Activated CD8-positive, alpha-beta T cell treated with anti-CD3 and anti-CD28 coated beads, Interleukin-2, amount 10 ng/mL, durations not matched to agents 7 days and 5 days (primary cell): ENCODE measurements at regions of chr2 and their contacts with region 1.

Region 1: DNA sequence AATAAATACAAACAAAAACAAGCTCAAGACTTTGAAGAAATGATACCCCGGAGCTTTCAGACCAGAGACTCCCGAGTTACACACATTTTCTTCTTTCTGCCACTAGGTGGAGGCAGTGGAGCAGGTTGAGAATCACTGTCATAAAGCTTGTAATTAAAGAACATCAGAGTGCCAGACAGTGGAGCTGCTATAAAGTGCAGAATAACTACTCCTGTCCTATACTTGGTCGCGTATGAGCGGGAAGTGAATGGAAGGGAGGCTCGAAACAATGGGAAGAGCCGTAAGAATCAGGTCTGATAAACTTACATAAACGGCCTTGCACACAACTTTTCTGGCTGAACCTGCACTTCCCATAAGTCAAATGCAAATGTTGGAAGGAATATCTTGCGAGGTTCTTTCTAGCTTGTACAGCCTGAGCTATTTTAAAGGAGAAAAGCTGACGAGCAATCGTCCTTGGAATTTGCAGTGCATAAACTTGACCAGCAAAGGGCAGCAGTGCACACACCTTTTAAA is 189.0 kb downstream of the RPIA start:
- DNase-seq: peak; percentile 52
- ATAC-seq: peak; percentile 60
- H3K4me3 Mint-ChIP-seq: no peak overlapping the region
- H3K27ac Mint-ChIP-seq: no peak overlapping the region
- H3K4me1 Mint-ChIP-seq: no peaks in the 10 kb centered on the region
- H3K27me3 Mint-ChIP-seq: peaks cover 24% of the 10 kb centered on the region

Region 2: GRCh38 chr2:88739985-88740600 is 140.4 kb before region 1 on chr2:
- CTCF ChIA-PET with region 1: interaction called, 15 read pairs
- POLR2A ChIA-PET with region 1: no interaction called
- DNase-seq: peak; percentile 80
- ATAC-seq: peak; percentile 70
- H3K4me3 Mint-ChIP-seq: no peak overlapping the region
- H3K27ac Mint-ChIP-seq: no peak overlapping the region
- H3K4me1 Mint-ChIP-seq: peaks cover 16% of the 10 kb centered on the region
- H3K27me3 Mint-ChIP-seq: no peaks in the 10 kb centered on the region

Region 3: DNA sequence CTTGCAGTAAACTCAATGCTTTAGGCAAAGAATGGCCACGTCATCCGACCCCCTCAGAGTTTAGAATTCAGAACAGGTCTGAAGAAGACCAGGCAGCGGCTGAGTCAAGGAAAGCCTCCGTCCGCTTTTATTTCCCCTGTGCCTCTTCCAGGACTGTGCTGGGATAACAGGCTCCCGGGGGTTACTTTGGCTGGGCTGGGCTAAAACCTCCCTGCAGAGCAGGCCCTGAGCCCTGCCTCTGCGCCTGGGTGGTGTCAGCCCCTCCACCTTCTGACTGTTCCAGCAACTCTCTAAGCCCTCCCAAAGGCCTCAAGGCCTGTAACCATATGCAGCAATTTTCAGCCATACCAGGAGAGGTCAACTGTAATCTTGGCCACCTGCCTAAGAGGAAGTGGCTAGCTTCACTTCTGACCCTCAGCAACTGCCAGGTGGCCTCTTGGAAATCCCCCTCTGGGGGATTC is 22.5 kb before region 1 on chr2:
- CTCF ChIA-PET with region 1: interaction called, 28 read pairs
- POLR2A ChIA-PET with region 1: no interaction called
- DNase-seq: no peak
- ATAC-seq: no peak
- H3K4me3 Mint-ChIP-seq: no peak overlapping the region
- H3K27ac Mint-ChIP-seq: no peak overlapping the region
- H3K4me1 Mint-ChIP-seq: no peaks in the 10 kb centered on the region
- H3K27me3 Mint-ChIP-seq: peaks cover 13% of the 10 kb centered on the region

Region 4: GRCh38 chr2:88865801-88866371 is 14.6 kb before region 1 on chr2:
- CTCF ChIA-PET with region 1: interaction called, 28 read pairs
- POLR2A ChIA-PET with region 1: no interaction called
- DNase-seq: no peak
- ATAC-seq: no peak
- H3K4me3 Mint-ChIP-seq: no peak overlapping the region
- H3K27ac Mint-ChIP-seq: no peak overlapping the region
- H3K4me1 Mint-ChIP-seq: peaks cover 13% of the 10 kb centered on the region
- H3K27me3 Mint-ChIP-seq: peaks cover 42% of the 10 kb centered on the region

Region 5: DNA sequence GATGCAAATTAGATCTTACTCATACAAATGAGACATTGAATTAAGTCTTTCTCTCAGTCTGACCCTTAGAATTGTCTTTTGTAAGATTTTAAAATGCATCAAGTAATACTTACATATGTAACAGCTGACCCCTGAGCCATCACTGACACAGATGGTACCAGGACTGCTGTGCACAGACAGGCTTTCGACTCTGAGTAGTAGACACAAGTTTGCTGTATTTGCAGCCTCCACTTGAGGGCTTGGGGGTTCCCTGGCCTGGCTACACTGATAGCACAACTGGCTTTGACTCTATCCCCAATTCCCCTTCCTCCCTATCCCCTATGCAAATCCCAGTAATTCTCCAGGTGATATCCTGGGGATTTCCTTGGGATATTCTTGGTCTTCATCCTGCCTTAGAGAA is 11.7 kb after region 1 on chr2:
- CTCF ChIA-PET with region 1: interaction called, 37 read pairs
- POLR2A ChIA-PET with region 1: no interaction called
- DNase-seq: no peak
- ATAC-seq: no peak
- H3K4me3 Mint-ChIP-seq: no peak overlapping the region
- H3K27ac Mint-ChIP-seq: no peak overlapping the region
- H3K4me1 Mint-ChIP-seq: no peaks in the 10 kb centered on the region
- H3K27me3 Mint-ChIP-seq: peaks cover 18% of the 10 kb centered on the region

Region 6: DNA sequence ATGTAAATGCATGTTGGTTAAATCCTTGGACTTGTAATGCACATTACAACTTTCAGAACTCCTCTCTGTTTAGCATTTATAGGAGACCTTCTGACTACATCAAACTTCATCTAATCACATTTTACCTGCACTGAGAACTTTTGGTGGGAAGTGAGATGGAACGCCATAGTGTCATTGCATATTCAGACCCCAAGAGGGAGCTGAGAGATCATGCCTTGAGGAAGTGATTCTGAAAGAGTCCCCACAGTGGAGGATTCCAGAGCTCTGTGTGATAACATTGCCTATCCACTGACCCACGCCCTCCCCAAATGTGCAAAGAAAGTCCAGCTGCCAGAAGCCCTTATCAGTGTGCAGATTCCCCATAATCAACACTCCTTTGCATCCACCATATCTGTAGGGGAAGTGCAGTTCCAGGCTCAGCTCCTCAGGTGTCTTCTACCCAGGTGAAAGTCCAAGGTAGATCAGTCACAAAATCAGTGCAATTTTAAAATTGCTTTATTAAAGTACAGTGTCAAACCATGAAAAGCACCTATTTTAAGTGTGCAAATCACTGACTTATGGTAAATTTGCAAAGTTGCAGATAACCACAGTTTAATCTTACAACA is 23.4 kb after region 1 on chr2:
- CTCF ChIA-PET with region 1: interaction called, 10 read pairs
- POLR2A ChIA-PET with region 1: no interaction called
- DNase-seq: peak; percentile 26
- ATAC-seq: no peak
- H3K4me3 Mint-ChIP-seq: no peak overlapping the region
- H3K27ac Mint-ChIP-seq: no peak overlapping the region
- H3K4me1 Mint-ChIP-seq: no peaks in the 10 kb centered on the region
- H3K27me3 Mint-ChIP-seq: peaks cover 11% of the 10 kb centered on the region

Region 7: GRCh38 chr2:88919087-88919738 is 38.7 kb after region 1 on chr2:
- CTCF ChIA-PET with region 1: interaction called, 15 read pairs
- POLR2A ChIA-PET with region 1: no interaction called
- DNase-seq: no peak
- ATAC-seq: no peak
- H3K4me3 Mint-ChIP-seq: no peak overlapping the region
- H3K27ac Mint-ChIP-seq: no peak overlapping the region
- H3K4me1 Mint-ChIP-seq: no peaks in the 10 kb centered on the region
- H3K27me3 Mint-ChIP-seq: peaks cover 8% of the 10 kb centered on the region